Posterior vena cava (tissue), 2 donors: ENCODE measurements at regions of chr16 and their contacts with region 1.

Region 1: GRCh38 chr16:68823401-68824135 is 19.8 kb upstream of the TANGO6 start:
- DNase-seq: no peak

Region 2: GRCh38 chr16:68689925-68690324 is 133.6 kb before region 1 on chr16:
- intact Hi-C with region 1: loop called in 1 of 2 experiments (anchors 10 kb)
- DNase-seq: no peak